Activated CD8-positive, alpha-beta T cell treated with anti-CD3 and anti-CD28 coated beads, Interleukin-2, amount 10 ng/mL, durations not matched to agents 7 days and 5 days (primary cell): ENCODE measurements at regions of chr1 and their contacts with region 1.

Region 1: GRCh38 chr1:26889551-26890466 is at the start of gene GPN2:
- DNase-seq: peak; percentile 86
- ATAC-seq: peak; percentile 97
- H3K4me3 Mint-ChIP-seq: peak within 1 kb of the TSS; percentile 96
- H3K27ac Mint-ChIP-seq: peak within 1 kb of the TSS; percentile 96
- H3K4me1 Mint-ChIP-seq: peaks cover 32% of the 10 kb centered on the region
- H3K27me3 Mint-ChIP-seq: no peaks in the 10 kb centered on the region
- total RNA-seq, gene GPN2: 28.9 to 32.8 TPM

Region 2: DNA sequence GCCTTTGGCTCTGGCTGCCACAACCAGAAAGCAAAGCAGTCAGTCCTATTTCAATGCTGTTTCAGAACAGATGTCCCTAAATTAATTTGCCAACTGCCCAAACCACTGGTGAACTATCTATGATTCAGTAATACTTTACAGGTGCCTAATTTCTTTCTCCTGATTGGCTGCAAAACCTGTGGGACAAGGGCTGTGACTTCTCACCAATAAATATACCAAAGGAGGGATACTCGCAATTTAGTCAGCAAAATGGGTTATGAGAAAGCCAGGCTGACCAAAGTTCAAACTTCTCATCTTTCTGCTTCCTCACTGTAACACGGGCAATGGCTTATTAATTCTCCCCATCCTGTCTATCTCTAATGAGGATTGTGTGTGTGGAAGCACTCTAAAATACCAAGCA is 12.5 kb before region 1 on chr1:
- CTCF ChIA-PET with region 1: interaction called, 16 read pairs
- POLR2A ChIA-PET with region 1: interaction called, 6 read pairs
- DNase-seq: no peak
- ATAC-seq: no peak
- H3K4me3 Mint-ChIP-seq: no peak overlapping the region
- H3K27ac Mint-ChIP-seq: no peak overlapping the region
- H3K4me1 Mint-ChIP-seq: no peaks in the 10 kb centered on the region
- H3K27me3 Mint-ChIP-seq: no peaks in the 10 kb centered on the region